ENCODE measurements at regions of chr5 and their contacts with region 1.

Region 1: DNA sequence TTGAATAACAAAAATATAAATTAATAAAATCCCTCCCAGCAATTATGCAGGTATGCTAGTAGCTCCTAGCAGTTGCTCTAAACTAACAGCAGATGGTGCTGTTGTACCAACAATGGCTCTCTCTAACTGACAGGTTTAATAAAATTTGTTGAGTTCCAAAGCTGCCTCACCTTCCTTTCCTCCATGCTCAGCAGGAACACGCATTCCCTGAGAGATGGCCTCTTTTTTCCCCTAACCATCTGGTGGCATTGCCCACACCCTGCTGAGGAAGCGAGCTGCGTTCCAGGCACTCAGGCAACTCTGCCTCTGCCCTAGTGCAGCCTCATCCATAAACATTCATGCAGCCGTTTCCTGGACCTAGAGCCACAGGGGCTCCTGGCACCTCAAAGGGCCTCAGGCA is 106.2 kb downstream of the KLHL3 start:
- DNase-seq: peak in 4 of 5 donors; percentile 52 to 54 (median 54)
- H3K4me3 ChIP-seq: no peak overlapping the region
- H3K4me3 Mint-ChIP-seq: no peak overlapping the region
- H3K27ac ChIP-seq: no peak overlapping the region
- H3K27ac Mint-ChIP-seq: no peak overlapping the region
- H3K4me1 ChIP-seq: no peaks in the 10 kb centered on the region
- H3K4me1 Mint-ChIP-seq: no peaks in the 10 kb centered on the region
- H3K27me3 ChIP-seq: no peaks in the 10 kb centered on the region
- H3K27me3 Mint-ChIP-seq: no peaks in the 10 kb centered on the region

Region 2: DNA sequence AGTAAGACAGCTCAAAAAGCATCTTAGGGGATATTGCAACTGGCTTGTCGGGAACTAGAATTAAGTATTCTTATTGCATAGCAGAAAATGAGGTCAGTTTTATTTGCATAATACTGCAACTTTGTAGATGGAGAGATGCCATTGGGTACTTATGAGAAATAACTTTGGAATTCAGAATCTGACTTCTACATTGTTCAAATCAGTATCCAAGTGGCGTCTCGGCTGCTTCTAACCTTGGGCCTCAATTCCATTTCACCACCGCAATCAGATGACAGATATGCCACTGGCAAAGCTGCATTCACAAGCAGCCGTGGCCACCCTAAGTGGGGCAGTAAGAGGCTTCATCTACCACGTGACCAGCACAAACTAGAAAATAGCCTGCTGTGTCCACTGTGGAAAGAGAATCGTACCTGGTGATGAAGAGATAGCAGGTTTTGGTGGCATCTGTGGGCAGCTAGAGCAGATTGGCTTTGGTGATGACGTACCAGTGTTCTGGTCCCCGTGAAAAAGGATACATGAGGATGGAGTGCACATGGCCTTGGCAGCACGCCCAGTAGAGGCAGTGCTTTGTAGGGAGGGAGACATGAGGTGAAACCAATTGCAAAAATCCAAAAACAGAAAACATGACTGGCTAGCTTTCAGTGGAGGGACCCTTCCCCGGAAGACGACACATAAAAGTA is 10.3 kb before region 1 on chr5:
- CTCF ChIA-PET with region 1: interaction called, 10 read pairs
- POLR2A ChIA-PET with region 1: no interaction called
- intact Hi-C with region 1: no loop called
- DNase-seq: no peak
- H3K4me3 ChIP-seq: no peak overlapping the region
- H3K4me3 Mint-ChIP-seq: no peak overlapping the region
- H3K27ac ChIP-seq: no peak overlapping the region
- H3K27ac Mint-ChIP-seq: peak overlapping the region in 1 of 7 donors; percentile 43
- H3K4me1 ChIP-seq: no peaks in the 10 kb centered on the region
- H3K4me1 Mint-ChIP-seq: peaks cover 0 to under 1% (median 0%) of the 10 kb centered on the region in 4 donors
- H3K27me3 ChIP-seq: no peaks in the 10 kb centered on the region
- H3K27me3 Mint-ChIP-seq: no peaks in the 10 kb centered on the region

Region 3: DNA sequence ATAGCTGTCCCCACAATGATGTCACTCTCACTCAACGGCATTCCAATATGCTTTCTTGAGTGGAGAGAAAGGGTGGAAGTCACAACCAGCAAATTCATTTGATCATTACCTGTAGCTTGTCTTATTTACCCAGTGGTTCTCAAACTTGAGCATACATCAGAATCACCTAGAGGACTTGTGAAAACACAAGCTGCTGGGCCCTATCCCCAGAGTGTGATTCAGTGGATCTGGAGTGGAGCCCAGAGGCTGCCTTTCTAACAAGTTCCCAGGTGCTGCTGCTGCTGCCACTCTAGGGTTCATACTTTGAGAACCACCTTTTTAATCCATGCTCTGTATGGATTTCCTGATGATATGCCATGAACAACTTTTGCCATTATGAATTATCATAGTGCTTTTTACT is 11.5 kb after region 1 on chr5:
- CTCF ChIA-PET with region 1: interaction called, 35 read pairs
- POLR2A ChIA-PET with region 1: no interaction called
- intact Hi-C with region 1: no loop called
- DNase-seq: no peak
- H3K4me3 ChIP-seq: no peak overlapping the region
- H3K4me3 Mint-ChIP-seq: no peak overlapping the region
- H3K27ac ChIP-seq: no peak overlapping the region
- H3K27ac Mint-ChIP-seq: no peak overlapping the region
- H3K4me1 ChIP-seq: no peaks in the 10 kb centered on the region
- H3K4me1 Mint-ChIP-seq: no peaks in the 10 kb centered on the region
- H3K27me3 ChIP-seq: no peaks in the 10 kb centered on the region
- H3K27me3 Mint-ChIP-seq: no peaks in the 10 kb centered on the region

Region 4: DNA sequence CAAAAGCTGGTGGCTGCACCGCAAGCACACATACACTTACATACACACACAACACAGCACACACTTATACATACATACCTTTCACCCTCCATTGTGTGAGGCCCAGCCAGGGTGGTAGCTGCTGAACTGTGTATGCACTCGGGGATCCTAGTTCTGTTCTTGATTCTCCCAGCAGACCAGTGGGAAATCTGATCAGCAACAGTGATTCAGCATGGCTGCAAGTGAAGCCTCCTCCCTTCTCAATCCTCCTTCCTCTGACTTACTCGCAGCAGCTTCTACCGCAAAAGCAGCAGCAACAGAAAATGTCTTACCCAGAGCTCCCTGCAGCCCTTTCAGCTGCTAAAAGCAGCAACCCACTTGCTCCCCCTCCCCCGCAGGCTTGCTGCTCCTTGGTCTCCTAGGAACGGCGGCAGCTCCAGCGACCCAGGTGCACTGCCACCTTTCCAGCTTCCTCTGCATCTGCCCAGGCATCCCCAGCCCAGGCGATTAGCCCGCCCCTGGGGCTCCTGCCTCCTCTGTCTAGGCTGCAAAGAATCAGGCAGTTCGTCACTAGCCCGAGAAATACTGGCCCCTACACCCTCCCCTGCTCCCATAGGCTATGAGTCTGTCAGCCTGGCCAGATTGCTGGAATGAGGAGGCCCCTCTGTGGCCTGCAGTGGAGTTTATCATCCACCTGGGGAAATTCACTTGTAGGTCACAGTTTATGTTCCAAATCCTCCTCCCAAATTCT is 106.1 kb after region 1 on chr5 and contains the start of gene KLHL3:
- CTCF ChIA-PET with region 1: interaction called, 127 read pairs
- POLR2A ChIA-PET with region 1: interaction called, 3 read pairs
- intact Hi-C with region 1: no loop called
- DNase-seq: peak in 4 of 5 donors; percentile 26 to 39 (median 28)
- H3K4me3 ChIP-seq: peak within 1 kb of the TSS; percentile 61 to 73
- H3K4me3 Mint-ChIP-seq: no peak within 1 kb of the TSS
- H3K27ac ChIP-seq: peak within 1 kb of the TSS; percentile 36
- H3K27ac Mint-ChIP-seq: no peak within 1 kb of the TSS
- H3K4me1 ChIP-seq: peaks cover 68% of the 10 kb centered on the region
- H3K4me1 Mint-ChIP-seq: peaks cover 13 to 20% (median 14%) of the 10 kb centered on the region in 4 donors
- H3K27me3 ChIP-seq: no peaks in the 10 kb centered on the region
- H3K27me3 Mint-ChIP-seq: no peaks in the 10 kb centered on the region
- total RNA-seq, gene KLHL3: 22.0 to 25.9 TPM

Region 5: DNA sequence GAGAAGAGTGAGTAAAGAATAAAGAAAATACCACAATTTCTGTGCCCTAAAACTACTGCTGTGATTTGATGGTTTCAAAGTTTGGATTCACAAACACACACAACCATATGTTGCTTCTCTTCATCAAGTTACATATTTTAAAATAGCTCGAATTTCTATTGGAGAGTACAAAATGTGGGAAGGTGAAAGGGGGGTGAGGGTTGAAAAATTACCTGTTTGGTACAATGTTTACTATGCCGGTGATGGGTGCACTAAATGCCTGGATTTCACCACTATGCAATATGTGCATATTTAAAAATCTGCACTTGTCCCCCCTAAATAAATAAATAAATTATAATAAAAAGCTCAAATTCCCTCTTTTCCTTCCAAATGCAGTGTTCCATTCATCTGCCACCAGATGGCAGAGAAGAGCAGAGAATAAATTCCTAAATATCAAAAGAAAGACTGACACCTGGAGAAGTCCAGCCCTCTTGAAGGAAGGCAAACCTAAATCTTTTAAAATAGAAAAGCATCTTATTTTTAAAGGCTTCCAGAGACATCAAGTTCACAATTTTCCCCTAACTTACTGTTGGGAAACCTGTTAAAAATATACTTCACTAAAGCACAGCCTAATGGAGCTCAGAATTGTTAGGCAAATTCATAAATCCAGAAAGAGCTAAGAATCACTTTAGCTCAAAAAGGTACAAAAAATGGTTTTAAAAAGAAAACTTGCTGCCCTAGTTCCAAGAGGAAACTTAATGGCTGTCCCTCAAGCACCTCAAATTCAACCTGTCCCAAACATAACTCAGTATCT is 149.3 kb after region 1 on chr5:
- CTCF ChIA-PET with region 1: interaction called, 29 read pairs
- POLR2A ChIA-PET with region 1: no interaction called
- intact Hi-C with region 1: no loop called
- DNase-seq: peak in 4 of 5 donors; percentile 8 to 23 (median 18)
- H3K4me3 ChIP-seq: no peak overlapping the region
- H3K4me3 Mint-ChIP-seq: no peak overlapping the region
- H3K27ac ChIP-seq: no peak overlapping the region
- H3K27ac Mint-ChIP-seq: no peak overlapping the region
- H3K4me1 ChIP-seq: no peaks in the 10 kb centered on the region
- H3K4me1 Mint-ChIP-seq: no peaks in the 10 kb centered on the region
- H3K27me3 ChIP-seq: no peaks in the 10 kb centered on the region
- H3K27me3 Mint-ChIP-seq: peaks cover 4 to 5% of the 10 kb centered on the region in 2 donors

Region 6: DNA sequence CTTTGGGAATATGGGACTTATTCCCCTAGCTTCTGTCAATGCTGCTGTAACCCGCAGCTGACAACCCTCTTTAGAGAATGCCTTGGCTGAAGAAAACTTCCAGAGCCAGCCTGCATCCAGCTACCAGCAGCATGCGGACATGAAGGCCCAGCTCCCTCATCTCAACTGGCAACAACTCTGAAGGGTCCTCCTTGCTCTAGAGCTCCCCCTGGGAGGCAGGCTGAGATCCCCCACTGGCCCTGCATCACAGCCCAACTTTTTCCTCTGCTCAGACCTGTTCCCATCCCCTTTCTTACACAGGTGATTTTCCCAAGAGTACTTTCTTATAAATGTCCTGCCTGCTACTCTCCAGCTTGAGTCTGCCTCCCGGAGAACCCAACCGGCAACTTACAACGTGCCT is 435.5 kb after region 1 on chr5:
- CTCF ChIA-PET with region 1: interaction called, 84 read pairs
- POLR2A ChIA-PET with region 1: no interaction called
- intact Hi-C with region 1: loop called (anchors 1 kb)
- DNase-seq: no peak
- H3K4me3 ChIP-seq: no peak overlapping the region
- H3K4me3 Mint-ChIP-seq: no peak overlapping the region
- H3K27ac ChIP-seq: no peak overlapping the region
- H3K27ac Mint-ChIP-seq: peak overlapping the region in 2 of 7 donors; percentile 7 to 29
- H3K4me1 ChIP-seq: no peaks in the 10 kb centered on the region
- H3K4me1 Mint-ChIP-seq: peaks cover 3 to 6% (median 5%) of the 10 kb centered on the region in 4 donors
- H3K27me3 ChIP-seq: no peaks in the 10 kb centered on the region
- H3K27me3 Mint-ChIP-seq: peaks cover 0 to 2% of the 10 kb centered on the region in 2 donors

Region 7: DNA sequence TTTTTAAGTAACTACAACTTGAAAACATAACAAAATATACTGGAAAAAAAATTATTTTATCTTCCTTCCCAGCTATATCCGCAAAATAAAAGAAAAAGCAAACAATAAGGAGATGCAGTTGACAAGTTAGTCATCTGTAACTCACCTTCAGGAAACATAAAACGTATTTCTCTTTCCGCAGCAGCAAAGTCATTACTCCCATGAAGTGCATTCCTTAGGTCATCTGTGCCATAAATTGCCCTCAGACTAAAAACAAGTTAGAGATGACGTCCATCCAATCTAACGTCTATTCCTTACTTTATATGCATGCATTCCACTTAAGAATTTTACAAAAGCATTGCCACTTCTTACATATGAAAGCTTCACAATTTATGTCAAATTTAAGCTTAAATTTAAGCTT is 498.7 kb after region 1 on chr5:
- CTCF ChIA-PET with region 1: no interaction called
- POLR2A ChIA-PET with region 1: no interaction called
- intact Hi-C with region 1: loop called (anchors 1 kb)
- DNase-seq: no peak
- H3K4me3 ChIP-seq: no peak overlapping the region
- H3K4me3 Mint-ChIP-seq: no peak overlapping the region
- H3K27ac ChIP-seq: no peak overlapping the region
- H3K27ac Mint-ChIP-seq: no peak overlapping the region
- H3K4me1 ChIP-seq: no peaks in the 10 kb centered on the region
- H3K4me1 Mint-ChIP-seq: no peaks in the 10 kb centered on the region
- H3K27me3 ChIP-seq: no peaks in the 10 kb centered on the region
- H3K27me3 Mint-ChIP-seq: peaks cover 4 to 7% of the 10 kb centered on the region in 2 donors

Measured in CD4-positive, alpha-beta memory T cell (primary cell).